ENCODE measurements at regions of chr10 and their contacts with region 1.

Region 1: GRCh38 chr10:77593771-77594470 is 43.7 kb downstream of the KCNMA1 start:
- DNase-seq: no peak

Region 2: DNA sequence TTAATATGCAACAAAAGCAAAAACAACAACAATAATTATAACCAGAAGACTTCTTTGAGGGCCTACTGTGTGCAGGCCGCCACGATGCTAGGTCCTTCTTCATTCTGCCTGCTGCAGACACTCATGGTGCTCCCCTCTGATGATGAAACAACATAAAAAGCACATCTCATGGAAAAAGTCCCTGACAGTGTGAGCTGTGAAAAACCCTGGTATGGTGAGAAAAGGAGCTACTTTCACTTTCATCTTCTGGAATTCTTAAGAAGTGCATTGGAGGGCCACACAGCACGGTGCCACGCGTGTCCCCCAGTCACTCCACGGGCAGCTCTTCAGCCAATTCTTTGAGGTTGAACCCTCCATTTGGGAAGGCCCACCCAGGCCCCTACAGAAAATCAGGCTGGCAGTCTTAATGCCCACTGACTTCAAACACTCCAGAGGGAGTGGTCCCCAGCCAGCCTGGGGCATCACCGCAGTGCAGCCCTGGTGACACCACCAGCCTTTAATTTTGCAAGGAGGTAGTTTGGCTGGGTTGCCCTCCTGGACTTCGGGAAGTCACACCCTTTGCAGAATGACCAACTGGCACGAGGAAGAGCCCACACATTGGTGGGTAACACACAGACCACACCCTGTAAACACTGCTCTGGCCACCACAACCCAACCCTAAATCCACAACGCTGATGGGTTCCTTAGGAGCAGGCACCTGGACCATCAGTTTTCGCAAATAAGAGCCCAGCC is 36.0 kb after region 1 on chr10:
- intact Hi-C with region 1: loop called in 1 of 2 experiments (anchors 5 kb)
- DNase-seq: no peak

Region 3: GRCh38 chr10:77649333-77650331 is 55.7 kb after region 1 on chr10:
- intact Hi-C with region 1: loop called in 1 of 2 experiments (anchors 2 kb)
- DNase-seq: no peak

Measured in posterior vena cava (tissue), 2 donors.